ENCODE measurements at regions of chr13 and their contacts with region 1.

Region 1: GRCh38 chr13:48233046-48233907 is at the start of gene ITM2B:
- DNase-seq: peak; percentile 57 to 76 (median 70)
- ATAC-seq: peak; percentile 88
- H3K4me3 ChIP-seq: peak within 1 kb of the TSS; percentile 85
- H3K4me3 Mint-ChIP-seq: peak within 1 kb of the TSS; percentile 90 to 99 (median 97)
- H3K27ac ChIP-seq: peak within 1 kb of the TSS; percentile 94
- H3K27ac Mint-ChIP-seq: peak within 1 kb of the TSS; percentile 90 to 99 (median 98)
- H3K4me1 ChIP-seq: peaks cover 31 to 35% of the 10 kb centered on the region in 2 donors
- H3K4me1 Mint-ChIP-seq: peaks cover 32 to 63% (median 57%) of the 10 kb centered on the region in 7 donors
- H3K27me3 ChIP-seq: no peaks in the 10 kb centered on the region
- H3K27me3 Mint-ChIP-seq: peaks cover 0 to 31% (median 0%) of the 10 kb centered on the region in 5 donors
- total RNA-seq, gene ITM2B: 190 to 733 (median 412) TPM

Region 2: GRCh38 chr13:48000778-48001628 is 232.3 kb before region 1 on chr13 and contains the start of gene SUCLA2:
- CTCF ChIA-PET with region 1: no interaction called
- POLR2A ChIA-PET with region 1: no interaction called
- intact Hi-C with region 1: loop called in 1 of 2 experiments (anchors 1 kb)
- DNase-seq: peak; percentile 75 to 96 (median 88)
- ATAC-seq: peak; percentile 100
- H3K4me3 ChIP-seq: peak within 1 kb of the TSS; percentile 97
- H3K4me3 Mint-ChIP-seq: peak within 1 kb of the TSS; percentile 88 to 97 (median 96)
- H3K27ac ChIP-seq: peak within 1 kb of the TSS; percentile 81
- H3K27ac Mint-ChIP-seq: peak within 1 kb of the TSS; percentile 75 to 96 (median 91)
- H3K4me1 ChIP-seq: peaks cover 7 to 10% of the 10 kb centered on the region in 2 donors
- H3K4me1 Mint-ChIP-seq: peaks cover 24 to 48% (median 42%) of the 10 kb centered on the region in 7 donors
- H3K27me3 ChIP-seq: no peaks in the 10 kb centered on the region
- H3K27me3 Mint-ChIP-seq: peaks cover 0 to 2% (median 0%) of the 10 kb centered on the region in 5 donors
- total RNA-seq, gene SUCLA2: 20.0 to 36.6 (median 26.4) TPM

Region 3: DNA sequence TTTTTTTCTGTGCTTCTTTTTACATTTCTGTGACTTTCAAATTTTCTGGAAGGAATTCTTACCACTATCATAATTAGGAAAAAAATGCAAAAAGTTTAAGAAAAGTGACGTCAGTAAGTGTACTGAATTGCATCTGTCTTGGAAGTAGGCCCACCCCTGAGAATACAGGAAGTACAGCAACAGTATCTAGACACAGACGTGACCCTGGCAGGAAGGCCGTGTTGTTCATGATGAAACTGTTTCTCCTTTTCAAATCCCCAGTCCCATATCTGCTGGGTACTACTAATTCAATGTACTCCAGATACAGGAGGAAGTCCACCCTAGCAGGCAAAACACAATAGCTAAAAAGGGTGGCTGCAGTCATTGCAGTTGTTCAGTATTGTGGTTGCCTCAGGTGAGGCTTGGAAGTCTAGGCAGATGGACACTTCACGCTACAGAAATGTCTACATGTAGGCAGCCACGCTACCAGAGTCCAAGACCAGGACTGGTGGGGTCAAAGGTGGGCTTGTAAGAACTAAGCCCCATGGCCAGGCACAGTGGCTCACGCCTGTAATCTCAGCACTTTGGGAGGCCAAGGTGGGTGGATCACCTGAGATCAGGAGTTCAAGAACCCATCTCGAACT is 88.8 kb before region 1 on chr13:
- CTCF ChIA-PET with region 1: no interaction called
- POLR2A ChIA-PET with region 1: interaction called, 11 read pairs
- intact Hi-C with region 1: no loop called
- DNase-seq: peak in 4 of 9 donors; percentile 27 to 50 (median 30)
- ATAC-seq: peak; percentile 85
- H3K4me3 ChIP-seq: no peak overlapping the region
- H3K4me3 Mint-ChIP-seq: peak overlapping the region in 6 of 10 donors; percentile 9 to 56 (median 28)
- H3K27ac ChIP-seq: peak overlapping the region; percentile 52
- H3K27ac Mint-ChIP-seq: peak overlapping the region in 8 of 9 donors; percentile 56 to 97 (median 92)
- H3K4me1 ChIP-seq: peaks cover 5 to 9% of the 10 kb centered on the region in 2 donors
- H3K4me1 Mint-ChIP-seq: peaks cover 9 to 49% (median 36%) of the 10 kb centered on the region in 7 donors
- H3K27me3 ChIP-seq: no peaks in the 10 kb centered on the region
- H3K27me3 Mint-ChIP-seq: peaks cover 0 to 3% (median 0%) of the 10 kb centered on the region in 5 donors

Region 4: GRCh38 chr13:48194379-48194754 is 38.9 kb before region 1 on chr13:
- CTCF ChIA-PET with region 1: interaction called, 3 read pairs
- POLR2A ChIA-PET with region 1: interaction called, 61 read pairs
- intact Hi-C with region 1: no loop called
- DNase-seq: peak in 1 of 9 donors; percentile 20
- ATAC-seq: peak; percentile 86
- H3K4me3 ChIP-seq: no peak overlapping the region
- H3K4me3 Mint-ChIP-seq: peak overlapping the region in 9 of 10 donors; percentile 6 to 82 (median 56)
- H3K27ac ChIP-seq: no peak overlapping the region
- H3K27ac Mint-ChIP-seq: peak overlapping the region in 7 of 9 donors; percentile 14 to 86 (median 48)
- H3K4me1 ChIP-seq: peaks cover 4 to 12% of the 10 kb centered on the region in 2 donors
- H3K4me1 Mint-ChIP-seq: peaks cover 16 to 67% (median 44%) of the 10 kb centered on the region in 7 donors
- H3K27me3 ChIP-seq: no peaks in the 10 kb centered on the region
- H3K27me3 Mint-ChIP-seq: peaks cover 0 to 14% (median 0%) of the 10 kb centered on the region in 5 donors

Region 5: DNA sequence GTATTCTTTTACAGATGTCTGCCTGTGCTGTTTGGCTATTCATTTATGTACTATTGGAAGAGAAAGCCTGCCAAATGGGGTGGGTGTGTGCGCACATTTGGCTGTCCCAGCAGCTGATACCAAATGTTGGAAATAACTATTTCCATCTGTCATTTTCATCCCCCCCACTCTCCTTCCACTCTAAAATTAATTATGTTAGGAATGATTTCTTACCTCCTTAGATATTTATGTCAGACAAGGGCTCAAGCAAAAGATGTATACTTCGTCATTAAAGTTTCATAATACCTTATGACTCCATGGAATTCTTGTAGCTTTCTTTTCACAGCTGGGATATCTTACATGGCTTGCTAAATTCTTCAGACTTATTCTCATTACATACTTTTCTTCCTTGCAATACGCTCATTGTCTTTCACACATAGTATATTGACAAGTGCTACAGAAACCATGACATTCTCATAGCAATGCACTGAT is 18.4 kb after region 1 on chr13:
- CTCF ChIA-PET with region 1: no interaction called
- POLR2A ChIA-PET with region 1: interaction called, 5 read pairs
- intact Hi-C with region 1: loop called in 1 of 2 experiments (anchors 1 kb)
- DNase-seq: no peak
- ATAC-seq: no peak
- H3K4me3 ChIP-seq: no peak overlapping the region
- H3K4me3 Mint-ChIP-seq: peak overlapping the region in 5 of 10 donors; percentile 12 to 41 (median 38)
- H3K27ac ChIP-seq: no peak overlapping the region
- H3K27ac Mint-ChIP-seq: peak overlapping the region in 6 of 9 donors; percentile 38 to 81 (median 57)
- H3K4me1 ChIP-seq: peaks cover 2 to 49% of the 10 kb centered on the region in 2 donors
- H3K4me1 Mint-ChIP-seq: peaks cover 7 to 89% (median 74%) of the 10 kb centered on the region in 7 donors
- H3K27me3 ChIP-seq: no peaks in the 10 kb centered on the region
- H3K27me3 Mint-ChIP-seq: no peaks in the 10 kb centered on the region

Region 6: GRCh38 chr13:48275507-48275906 is 42.2 kb after region 1 on chr13:
- CTCF ChIA-PET with region 1: no interaction called
- POLR2A ChIA-PET with region 1: no interaction called
- intact Hi-C with region 1: no loop called
- DNase-seq: no peak
- ATAC-seq: no peak
- H3K4me3 ChIP-seq: no peak overlapping the region
- H3K4me3 Mint-ChIP-seq: no peak overlapping the region
- H3K27ac ChIP-seq: no peak overlapping the region
- H3K27ac Mint-ChIP-seq: no peak overlapping the region
- H3K4me1 ChIP-seq: no peaks in the 10 kb centered on the region
- H3K4me1 Mint-ChIP-seq: peaks cover 0 to 5% (median 0%) of the 10 kb centered on the region in 7 donors
- H3K27me3 ChIP-seq: no peaks in the 10 kb centered on the region
- H3K27me3 Mint-ChIP-seq: peaks cover 0 to 11% (median 0%) of the 10 kb centered on the region in 5 donors

Region 7: DNA sequence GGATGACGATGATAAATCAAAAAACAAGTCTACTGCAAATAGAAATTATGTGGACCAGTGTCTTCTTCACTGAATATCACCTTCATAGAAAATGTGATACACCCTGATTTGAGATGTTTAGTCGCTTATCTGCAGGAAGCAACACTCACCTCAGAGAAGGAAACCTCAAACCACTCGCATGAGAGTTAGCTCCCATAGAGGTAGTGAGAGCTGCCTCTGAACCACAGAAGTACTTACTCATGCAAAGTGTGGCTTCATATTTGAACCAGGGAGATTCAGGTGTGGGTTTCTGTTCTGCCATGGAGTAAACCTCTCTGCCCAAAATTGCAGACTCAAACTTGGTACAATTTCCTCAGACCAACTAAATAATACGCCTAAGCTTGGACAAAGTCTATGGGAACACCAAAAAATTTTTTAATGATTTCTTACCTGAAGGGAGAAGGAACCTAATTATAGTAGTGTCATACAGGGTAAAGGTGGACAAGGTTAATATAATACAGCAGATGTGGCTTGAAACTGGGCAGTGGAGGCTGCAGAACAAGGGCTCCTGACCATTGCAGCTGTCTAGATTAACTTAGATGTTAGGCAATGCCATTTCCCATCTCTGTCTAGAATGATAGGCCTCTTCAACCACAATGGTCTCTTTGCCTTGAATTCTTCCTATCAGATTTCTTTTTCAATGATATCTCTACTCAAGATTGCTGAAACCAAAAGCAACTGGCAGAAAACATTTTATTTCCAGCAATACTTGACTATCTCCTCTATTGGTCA is 329.2 kb after region 1 on chr13:
- CTCF ChIA-PET with region 1: no interaction called
- POLR2A ChIA-PET with region 1: interaction called, 3 read pairs
- intact Hi-C with region 1: loop called in 1 of 2 experiments (anchors 10 kb)
- DNase-seq: peak in 8 of 9 donors; percentile 67 to 87 (median 79)
- ATAC-seq: peak; percentile 100
- H3K4me3 ChIP-seq: peak overlapping the region; percentile 12
- H3K4me3 Mint-ChIP-seq: peak overlapping the region in 9 of 10 donors; percentile 0 to 68 (median 54)
- H3K27ac ChIP-seq: no peak overlapping the region
- H3K27ac Mint-ChIP-seq: peak overlapping the region in 2 of 9 donors; percentile 71 to 82
- H3K4me1 ChIP-seq: peaks cover 22 to 31% of the 10 kb centered on the region in 2 donors
- H3K4me1 Mint-ChIP-seq: peaks cover 28 to 51% (median 36%) of the 10 kb centered on the region in 7 donors
- H3K27me3 ChIP-seq: no peaks in the 10 kb centered on the region
- H3K27me3 Mint-ChIP-seq: peaks cover 7 to 67% (median 13%) of the 10 kb centered on the region in 5 donors